Mammary epithelial cell (primary cell): ENCODE measurements at regions of chr4 and their contacts with region 1.

Region 1: GRCh38 chr4:47933840-47934239 is 19.5 kb upstream of the NFXL1 start:
- DNase-seq: peak; percentile 12
- H3K4me3 ChIP-seq: no peak overlapping the region
- H3K27ac ChIP-seq: no peak overlapping the region
- H3K4me1 ChIP-seq: peaks cover 8% of the 10 kb centered on the region
- H3K27me3 ChIP-seq: no peaks in the 10 kb centered on the region
- CTCF ChIP-seq: peak; percentile 45 to 58

Region 2: GRCh38 chr4:46844325-46844917 is 1089.4 kb before region 1 on chr4:
- CTCF ChIA-PET with region 1: no interaction called
- dilution Hi-C with region 1: no loop called
- in situ Hi-C with region 1: no loop called
- intact Hi-C with region 1: loop called (anchors 10 kb)
- DNase-seq: peak; percentile 7
- H3K4me3 ChIP-seq: no peak overlapping the region
- H3K27ac ChIP-seq: no peak overlapping the region
- H3K4me1 ChIP-seq: no peaks in the 10 kb centered on the region
- H3K27me3 ChIP-seq: peaks cover 2% of the 10 kb centered on the region
- CTCF ChIP-seq: peak; percentile 66 to 68

Region 3: GRCh38 chr4:47598320-47598719 is 335.5 kb before region 1 on chr4:
- CTCF ChIA-PET with region 1: no interaction called
- dilution Hi-C with region 1: no loop called
- in situ Hi-C with region 1: no loop called
- intact Hi-C with region 1: loop called (anchors 10 kb)
- DNase-seq: peak; percentile 58
- H3K4me3 ChIP-seq: no peak overlapping the region
- H3K27ac ChIP-seq: no peak overlapping the region
- H3K4me1 ChIP-seq: peaks cover 16% of the 10 kb centered on the region
- H3K27me3 ChIP-seq: no peaks in the 10 kb centered on the region
- CTCF ChIP-seq: no peak

Region 4: GRCh38 chr4:47686294-47686872 is 247.5 kb before region 1 on chr4:
- CTCF ChIA-PET with region 1: no interaction called
- dilution Hi-C with region 1: no loop called
- in situ Hi-C with region 1: loop called in 1 of 2 experiments (anchors 25 kb)
- intact Hi-C with region 1: loop called (anchors 1 kb)
- DNase-seq: peak; percentile 28
- H3K4me3 ChIP-seq: no peak overlapping the region
- H3K27ac ChIP-seq: no peak overlapping the region
- H3K4me1 ChIP-seq: no peaks in the 10 kb centered on the region
- H3K27me3 ChIP-seq: peaks cover 4% of the 10 kb centered on the region
- CTCF ChIP-seq: peak; percentile 84 to 87

Region 5: DNA sequence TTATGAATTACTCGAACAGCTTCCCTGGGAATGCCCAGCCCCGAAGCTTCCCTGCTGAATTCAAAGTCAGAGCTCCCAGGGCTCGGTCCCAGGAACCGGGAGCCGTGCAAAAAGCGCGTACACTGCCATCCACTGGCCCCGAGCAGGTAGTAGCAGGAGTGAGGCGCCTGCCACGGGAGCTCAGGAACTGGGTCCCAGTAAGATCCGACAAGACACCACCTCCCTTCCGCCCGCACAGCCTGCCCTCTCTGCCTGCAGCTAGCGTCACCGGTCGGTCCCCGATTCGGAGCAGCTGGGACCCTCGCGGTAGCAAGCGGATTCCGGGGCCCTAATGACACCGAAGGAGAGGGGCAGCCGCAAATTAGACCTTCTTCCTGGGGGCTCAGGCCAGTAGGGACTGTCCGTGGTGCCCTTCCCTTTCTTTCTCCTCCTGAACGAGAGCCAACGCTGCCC is 97.2 kb before region 1 on chr4:
- CTCF ChIA-PET with region 1: no interaction called
- dilution Hi-C with region 1: no loop called
- in situ Hi-C with region 1: no loop called
- intact Hi-C with region 1: loop called (anchors 1 kb)
- DNase-seq: peak; percentile 78
- H3K4me3 ChIP-seq: peak overlapping the region; percentile 48 to 58 (median 55)
- H3K27ac ChIP-seq: no peak overlapping the region
- H3K4me1 ChIP-seq: peaks cover 19% of the 10 kb centered on the region
- H3K27me3 ChIP-seq: no peaks in the 10 kb centered on the region
- CTCF ChIP-seq: peak; percentile 67 to 88

Region 6: GRCh38 chr4:48127682-48128394 is 194.0 kb after region 1 on chr4:
- CTCF ChIA-PET with region 1: no interaction called
- dilution Hi-C with region 1: no loop called
- in situ Hi-C with region 1: no loop called
- intact Hi-C with region 1: no loop called
- DNase-seq: peak; percentile 93
- H3K4me3 ChIP-seq: peak overlapping the region in 1 of 3 experiments; percentile 2
- H3K27ac ChIP-seq: peak overlapping the region; percentile 37
- H3K4me1 ChIP-seq: peaks cover 17% of the 10 kb centered on the region
- H3K27me3 ChIP-seq: no peaks in the 10 kb centered on the region
- CTCF ChIP-seq: peak; percentile 44 to 63